Left lung (tissue), 14 donors: ENCODE measurements at regions of chr12 and their contacts with region 1.

Region 1: DNA sequence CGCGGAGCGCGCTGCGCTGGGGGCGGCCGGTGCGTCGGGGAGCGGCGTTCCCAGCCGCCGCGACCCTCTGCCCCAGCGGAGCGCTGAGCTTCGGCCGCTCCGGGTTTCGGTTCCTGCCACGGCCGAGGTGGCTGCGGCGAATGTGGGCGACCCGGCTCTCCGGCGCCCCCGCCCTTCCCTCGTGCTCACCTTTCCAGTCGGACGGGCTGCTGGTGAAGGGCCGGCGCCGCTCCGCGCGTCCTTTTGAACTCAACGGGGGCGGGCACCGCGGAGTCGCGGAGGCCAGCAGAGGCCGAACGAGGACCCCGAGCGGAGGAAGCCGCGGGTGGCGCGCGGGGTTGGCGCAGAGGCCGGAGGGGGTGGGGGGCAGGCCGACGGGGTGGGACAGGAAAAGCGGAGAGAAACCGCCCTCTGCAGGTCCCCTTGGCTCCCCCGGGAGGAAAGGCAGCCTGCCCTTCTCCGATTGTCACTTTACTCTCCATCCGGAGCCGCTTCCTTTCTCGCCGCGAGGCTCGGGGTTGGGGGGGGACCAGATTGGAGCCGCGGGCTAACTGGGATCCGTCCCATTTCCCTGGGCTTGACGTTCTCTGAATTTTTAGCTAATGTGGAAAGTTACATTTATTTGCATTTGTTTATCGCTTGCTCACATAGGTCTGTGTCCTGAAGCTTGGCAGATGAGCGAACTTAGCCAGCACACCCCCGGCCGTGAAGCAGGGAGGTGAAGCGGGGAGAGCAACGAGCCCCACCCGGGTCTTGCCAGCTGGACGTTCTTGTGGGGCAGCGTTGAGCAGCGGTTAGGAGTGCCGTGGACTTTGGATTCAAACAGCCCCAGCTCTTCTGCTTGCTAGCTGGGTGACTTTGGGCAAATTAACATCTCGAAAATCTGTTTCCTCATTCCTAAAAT is at the start of gene SMAGP:
- DNase-seq: peak; percentile 53 to 94 (median 82)
- ATAC-seq: peak; percentile 85
- H3K4me3 ChIP-seq: peak within 1 kb of the TSS; percentile 70 to 71
- H3K27ac ChIP-seq: peak within 1 kb of the TSS; percentile 79 to 86
- H3K4me1 ChIP-seq: peaks cover 5 to 24% of the 10 kb centered on the region in 2 donors
- H3K27me3 ChIP-seq: peaks cover 0 to 26% of the 10 kb centered on the region in 2 donors
- CTCF ChIP-seq: no peak
- polyA plus RNA-seq, gene SMAGP: 18.8 to 25.5 (median 23.6) TPM

Region 2: GRCh38 chr12:51341259-51342007 is 71.1 kb after region 1 on chr12:
- intact Hi-C with region 1: loop called in 1 of 2 experiments (anchors 10 kb)
- DNase-seq: peak in 3 of 4 donors; percentile 65 to 76 (median 74)
- ATAC-seq: peak; percentile 98
- H3K4me3 ChIP-seq: no peak overlapping the region
- H3K27ac ChIP-seq: no peak overlapping the region
- H3K4me1 ChIP-seq: peaks cover 2 to 14% of the 10 kb centered on the region in 2 donors
- H3K27me3 ChIP-seq: no peaks in the 10 kb centered on the region
- CTCF ChIP-seq: peak; percentile 93 to 96

Region 3: GRCh38 chr12:51441583-51441982 is 171.3 kb after region 1 on chr12:
- intact Hi-C with region 1: no loop called
- DNase-seq: no peak
- ATAC-seq: no peak
- H3K4me3 ChIP-seq: no peak overlapping the region
- H3K27ac ChIP-seq: no peak overlapping the region
- H3K4me1 ChIP-seq: no peaks in the 10 kb centered on the region
- H3K27me3 ChIP-seq: no peaks in the 10 kb centered on the region
- CTCF ChIP-seq: no peak

Region 4: DNA sequence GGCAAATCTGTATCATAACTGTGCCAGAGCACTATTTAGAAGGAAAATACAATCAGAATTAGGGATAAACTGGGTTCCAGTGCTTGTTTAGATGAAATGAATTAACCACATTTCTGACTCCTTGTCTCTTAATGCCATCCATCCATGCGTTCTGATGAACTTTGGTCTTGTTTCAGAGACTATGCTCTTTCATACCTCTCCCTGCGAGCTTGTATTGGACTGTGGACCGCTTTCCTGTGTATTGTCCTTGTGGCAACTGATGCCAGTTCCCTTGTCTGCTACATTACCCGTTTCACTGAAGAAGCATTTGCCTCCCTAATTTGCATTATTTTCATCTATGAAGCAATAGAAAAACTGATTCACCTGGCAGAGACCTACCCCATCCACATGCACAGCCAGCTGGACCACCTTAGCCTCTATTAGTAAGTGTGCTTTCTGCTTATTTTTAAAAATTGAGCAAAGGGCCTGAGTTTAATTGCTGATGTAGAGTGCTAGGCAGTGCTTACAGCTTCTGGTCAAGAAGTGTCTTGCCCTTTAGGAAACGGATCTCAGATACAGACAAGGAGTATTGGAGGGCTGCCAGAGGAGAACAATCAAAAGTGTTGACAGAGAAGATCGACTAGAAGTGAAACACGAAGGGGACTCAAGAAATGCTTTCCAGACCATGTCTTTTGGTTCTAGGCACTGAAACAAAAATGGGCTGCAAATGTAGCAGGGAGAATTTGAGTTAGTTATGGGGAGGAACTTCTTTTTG is 201.0 kb after region 1 on chr12:
- intact Hi-C with region 1: no loop called
- DNase-seq: no peak
- ATAC-seq: no peak
- H3K4me3 ChIP-seq: no peak overlapping the region
- H3K27ac ChIP-seq: no peak overlapping the region
- H3K4me1 ChIP-seq: no peaks in the 10 kb centered on the region
- H3K27me3 ChIP-seq: no peaks in the 10 kb centered on the region
- CTCF ChIP-seq: no peak

Region 5: DNA sequence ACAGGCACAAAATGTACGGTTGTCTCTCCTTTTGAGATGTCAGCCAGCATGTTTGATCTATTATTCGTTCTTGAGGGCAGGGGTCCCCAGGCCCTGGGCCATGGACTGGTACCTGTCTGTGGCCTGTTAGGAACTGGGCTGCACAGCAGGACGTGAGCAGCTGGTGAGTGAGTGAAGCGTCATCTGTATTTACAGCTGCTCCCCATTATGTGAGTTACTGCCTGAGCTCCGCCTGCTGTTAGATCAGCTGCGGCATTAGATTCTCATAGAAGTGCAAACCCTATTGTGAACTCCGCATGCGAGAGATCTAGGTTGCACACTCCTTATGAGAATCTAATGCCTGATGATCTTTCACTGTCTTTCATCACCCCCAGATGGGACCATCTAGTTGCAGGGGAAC is 279.3 kb after region 1 on chr12:
- intact Hi-C with region 1: no loop called
- DNase-seq: no peak
- ATAC-seq: no peak
- H3K4me3 ChIP-seq: no peak overlapping the region
- H3K27ac ChIP-seq: no peak overlapping the region
- H3K4me1 ChIP-seq: no peaks in the 10 kb centered on the region
- H3K27me3 ChIP-seq: no peaks in the 10 kb centered on the region
- CTCF ChIP-seq: no peak